ENCODE measurements at regions of chr11 and their contacts with region 1.

Region 1: GRCh38 chr11:125923012-125923579 is 18.8 kb downstream of the DDX25 start:
- DNase-seq: peak; percentile 79

Region 2: DNA sequence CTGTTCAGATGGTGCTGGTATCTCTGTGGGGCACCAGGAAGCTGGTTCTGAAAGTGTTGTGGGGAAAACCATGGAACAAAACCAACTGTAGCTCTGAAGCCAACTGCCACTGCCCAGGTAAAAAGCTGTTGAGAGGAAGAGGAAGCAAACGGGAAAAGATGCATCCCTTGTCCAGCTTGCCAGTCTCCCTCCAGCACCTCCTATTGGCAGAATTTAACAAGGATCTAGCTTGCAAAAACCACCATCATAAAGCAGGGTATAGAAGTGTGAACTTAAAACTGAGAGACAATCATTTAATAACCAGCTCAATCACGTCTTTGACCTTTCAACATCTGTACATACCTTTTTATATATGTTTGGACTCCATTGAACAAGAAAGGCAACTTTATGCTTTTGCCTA is 172.5 kb before region 1 on chr11:
- intact Hi-C with region 1: no loop called
- DNase-seq: no peak

Region 3: GRCh38 chr11:125842321-125842948 is 80.7 kb before region 1 on chr11:
- intact Hi-C with region 1: no loop called
- DNase-seq: no peak

Region 4: GRCh38 chr11:126062679-126063506 is 139.8 kb after region 1 on chr11 and contains the start of gene CDON:
- intact Hi-C with region 1: loop called in 1 of 2 experiments (anchors 5 kb)
- DNase-seq: peak; percentile 96
- total RNA-seq, gene CDON: 11.2 to 31.3 TPM

Region 5: GRCh38 chr11:126186708-126187529 is 263.8 kb after region 1 on chr11:
- intact Hi-C with region 1: loop called (anchors 2 kb)
- DNase-seq: no peak

Region 6: DNA sequence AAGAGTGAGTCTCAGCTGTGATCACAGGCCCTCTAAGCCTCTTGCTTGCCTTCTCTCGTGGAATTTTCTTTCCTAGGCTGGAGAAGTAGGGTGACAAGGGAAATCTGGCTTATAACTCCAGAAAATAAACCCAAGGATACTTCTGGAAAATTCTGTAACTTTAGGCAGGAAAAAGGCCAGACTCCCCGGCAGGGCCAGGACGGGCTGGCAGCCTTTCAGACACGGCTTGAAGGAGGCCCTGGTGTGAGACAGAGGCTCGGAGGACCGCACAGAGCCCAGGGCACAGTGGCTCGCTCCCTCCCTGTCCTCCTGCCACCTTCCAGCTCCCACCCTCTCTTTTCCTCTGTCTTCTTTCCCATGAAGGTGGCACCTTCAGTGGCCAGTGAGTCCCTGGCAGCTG is 269.3 kb after region 1 on chr11:
- intact Hi-C with region 1: loop called (anchors 1 to 2 kb)
- DNase-seq: no peak

Region 7: DNA sequence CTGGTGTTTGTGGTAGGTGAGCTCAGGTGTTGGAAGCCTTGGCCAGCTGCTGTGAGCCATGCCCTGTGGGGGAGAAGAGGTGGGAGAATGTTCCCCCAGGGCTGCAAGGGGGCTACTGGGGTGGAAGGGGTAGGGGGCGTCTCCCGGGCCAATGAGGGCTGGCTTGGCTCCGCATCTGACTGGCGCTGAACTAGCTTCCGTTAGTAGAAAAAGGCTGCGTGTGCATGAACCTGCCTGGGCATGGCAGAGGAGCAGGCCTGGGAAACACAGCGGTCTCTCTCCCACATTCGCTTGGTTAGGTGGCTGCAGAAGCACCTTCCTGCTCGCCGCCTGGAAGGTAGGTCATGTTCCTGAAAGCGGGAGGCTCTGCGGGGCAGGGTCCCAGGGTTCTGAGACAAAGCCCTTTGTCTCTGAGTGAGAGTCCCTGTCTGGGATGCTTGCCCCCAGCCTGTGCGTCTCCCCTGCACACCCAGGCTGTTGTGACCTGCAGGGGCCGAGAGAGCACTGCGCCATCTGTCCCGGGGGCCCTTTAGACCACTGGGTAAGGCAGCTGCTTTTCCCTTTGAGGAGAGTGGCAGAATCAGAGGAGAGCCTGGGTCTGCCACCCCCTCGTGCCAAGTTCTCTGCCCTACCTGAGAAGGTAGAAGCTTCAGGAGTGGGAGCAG is 611.2 kb after region 1 on chr11:
- intact Hi-C with region 1: no loop called
- DNase-seq: no peak